Right ventricle myocardium superior (tissue), 1 donor: ENCODE measurements at regions of chr18 and their contacts with region 1.

Region 1: DNA sequence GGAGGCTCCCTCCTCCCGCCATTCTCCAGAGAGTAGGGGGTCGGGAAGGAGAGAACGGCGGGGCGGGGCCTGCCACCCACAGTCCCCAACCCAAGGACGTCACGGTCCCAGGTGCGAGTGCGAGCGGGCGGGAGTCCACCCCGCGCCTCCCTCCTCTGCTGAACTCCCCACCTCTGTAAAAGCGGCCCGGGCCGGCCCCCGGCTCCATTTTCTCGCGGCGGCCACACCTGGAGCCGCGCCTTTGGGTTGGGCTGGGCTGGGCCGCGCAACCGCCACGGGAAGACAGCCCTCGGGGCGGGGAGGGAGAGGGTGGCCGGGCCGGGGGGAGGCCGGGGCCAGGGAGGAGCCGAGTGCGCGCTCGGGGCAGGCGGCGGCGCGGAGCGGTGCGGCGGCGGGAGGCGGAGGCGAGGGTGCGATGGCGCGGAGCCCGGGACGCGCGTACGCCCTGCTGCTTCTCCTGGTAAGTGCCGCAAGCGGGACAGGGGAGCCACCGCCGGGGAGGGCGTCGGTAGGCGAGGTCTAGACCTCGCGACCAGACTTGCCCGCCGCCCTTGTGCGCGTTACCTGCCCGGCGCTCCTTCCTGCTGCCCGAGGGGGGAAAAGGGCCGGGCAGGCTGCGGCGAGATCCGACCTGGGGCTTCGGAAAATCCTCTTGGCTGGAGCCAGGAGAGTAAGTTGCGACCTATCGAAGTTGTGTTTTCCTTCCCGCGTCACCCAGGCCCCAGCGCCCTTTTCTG is at the start of gene DSG2:
- DNase-seq: peak; percentile 81
- ATAC-seq: peak; percentile 97
- total RNA-seq, gene DSG2: 37.1 TPM

Region 2: GRCh38 chr18:31101183-31102024 is 396.6 kb before region 1 on chr18:
- intact Hi-C with region 1: loop called (anchors 5 kb)
- DNase-seq: peak; percentile 91
- ATAC-seq: peak; percentile 92

Region 3: DNA sequence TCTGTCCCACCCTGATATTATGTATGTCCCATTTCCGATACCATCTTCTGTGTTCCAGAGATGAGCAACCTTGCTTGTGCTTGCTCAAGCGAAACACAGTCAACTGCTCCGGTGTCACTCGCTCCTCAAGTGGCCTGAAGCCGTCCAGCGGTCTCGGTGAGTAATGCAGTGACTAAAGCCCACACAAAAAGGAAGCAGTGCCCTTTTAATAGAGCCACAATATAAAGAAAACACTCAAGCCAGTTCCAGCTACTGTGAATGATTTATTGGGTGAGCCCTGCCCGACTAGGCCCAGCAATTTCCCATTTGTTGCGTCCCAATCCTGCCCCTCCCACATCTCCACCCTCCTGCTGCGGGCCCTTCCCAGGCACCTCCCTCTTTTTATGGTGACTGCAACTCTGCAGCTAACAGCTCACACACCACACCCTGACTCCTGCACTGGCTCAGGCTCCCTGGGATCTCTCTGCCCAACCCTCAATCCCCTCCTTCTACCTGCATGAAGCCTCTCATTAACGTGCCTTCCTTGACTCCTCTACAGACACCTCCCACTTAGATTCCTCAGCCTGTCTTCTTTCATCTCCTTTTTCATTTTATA is 291.1 kb before region 1 on chr18:
- intact Hi-C with region 1: no loop called
- DNase-seq: peak; percentile 69
- ATAC-seq: peak; percentile 78